A673 (cell line): ENCODE measurements at regions of chr10 and their contacts with region 1.

Region 1: DNA sequence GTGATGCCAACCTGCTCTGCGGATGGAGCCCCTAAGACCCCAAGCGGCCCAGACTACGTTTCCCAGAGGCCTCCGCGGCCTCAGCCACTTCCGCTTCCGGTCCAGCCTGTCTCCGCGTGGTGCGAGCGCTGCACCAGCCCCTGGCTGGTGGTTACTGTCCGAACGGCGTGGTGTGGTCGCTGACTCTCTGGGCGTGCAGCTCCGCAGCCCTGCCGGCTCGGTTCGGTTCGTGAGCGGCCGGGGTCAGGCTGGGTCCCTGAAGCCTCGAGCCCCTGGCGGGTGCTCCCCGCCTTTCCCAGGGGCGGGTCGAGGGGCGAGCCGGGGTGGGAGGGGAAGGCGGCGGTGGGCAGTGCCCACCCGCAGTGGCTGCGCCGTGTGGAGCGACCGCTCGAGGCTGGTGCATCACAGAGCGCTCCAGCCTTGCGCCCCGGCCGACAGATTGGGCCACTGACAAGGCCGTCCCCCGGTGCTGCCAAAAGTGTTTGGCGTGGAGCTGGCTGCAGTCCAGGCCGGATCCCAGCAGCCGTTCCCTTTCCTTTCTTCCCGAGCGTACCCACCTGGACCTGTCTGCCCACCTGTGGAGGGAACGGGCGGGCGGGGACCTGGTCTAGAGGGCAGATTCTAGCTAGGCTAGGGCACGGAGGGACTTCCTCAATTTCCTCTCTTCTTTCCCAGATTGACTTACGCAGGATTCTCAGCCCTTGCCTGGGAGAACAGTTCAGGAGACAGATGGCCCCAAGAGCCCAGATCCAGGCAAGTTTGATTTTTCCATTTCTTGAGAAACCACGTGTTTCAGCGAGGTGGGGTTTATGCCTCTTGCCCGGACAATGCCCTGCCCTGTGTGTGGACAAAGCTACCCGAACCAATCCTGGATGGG is at the start of gene ZNF485:
- DNase-seq: peak; percentile 79
- H3K4me3 ChIP-seq: peak within 1 kb of the TSS; percentile 82
- H3K27ac ChIP-seq: peak within 1 kb of the TSS; percentile 74
- H3K4me1 ChIP-seq: peaks cover 7% of the 10 kb centered on the region
- H3K27me3 ChIP-seq: no peaks in the 10 kb centered on the region
- CTCF ChIP-seq: no peak
- total RNA-seq, gene ZNF485: 5.1 and 7.2 TPM in 2 replicates

Region 2: GRCh38 chr10:43273543-43273942 is 333.0 kb before region 1 on chr10:
- CTCF ChIA-PET with region 1: no interaction called
- POLR2A ChIA-PET with region 1: no interaction called
- intact Hi-C with region 1: no loop called
- DNase-seq: no peak
- H3K4me3 ChIP-seq: no peak overlapping the region
- H3K27ac ChIP-seq: no peak overlapping the region
- H3K4me1 ChIP-seq: no peaks in the 10 kb centered on the region
- H3K27me3 ChIP-seq: peaks cover 55% of the 10 kb centered on the region
- CTCF ChIP-seq: no peak

Region 3: DNA sequence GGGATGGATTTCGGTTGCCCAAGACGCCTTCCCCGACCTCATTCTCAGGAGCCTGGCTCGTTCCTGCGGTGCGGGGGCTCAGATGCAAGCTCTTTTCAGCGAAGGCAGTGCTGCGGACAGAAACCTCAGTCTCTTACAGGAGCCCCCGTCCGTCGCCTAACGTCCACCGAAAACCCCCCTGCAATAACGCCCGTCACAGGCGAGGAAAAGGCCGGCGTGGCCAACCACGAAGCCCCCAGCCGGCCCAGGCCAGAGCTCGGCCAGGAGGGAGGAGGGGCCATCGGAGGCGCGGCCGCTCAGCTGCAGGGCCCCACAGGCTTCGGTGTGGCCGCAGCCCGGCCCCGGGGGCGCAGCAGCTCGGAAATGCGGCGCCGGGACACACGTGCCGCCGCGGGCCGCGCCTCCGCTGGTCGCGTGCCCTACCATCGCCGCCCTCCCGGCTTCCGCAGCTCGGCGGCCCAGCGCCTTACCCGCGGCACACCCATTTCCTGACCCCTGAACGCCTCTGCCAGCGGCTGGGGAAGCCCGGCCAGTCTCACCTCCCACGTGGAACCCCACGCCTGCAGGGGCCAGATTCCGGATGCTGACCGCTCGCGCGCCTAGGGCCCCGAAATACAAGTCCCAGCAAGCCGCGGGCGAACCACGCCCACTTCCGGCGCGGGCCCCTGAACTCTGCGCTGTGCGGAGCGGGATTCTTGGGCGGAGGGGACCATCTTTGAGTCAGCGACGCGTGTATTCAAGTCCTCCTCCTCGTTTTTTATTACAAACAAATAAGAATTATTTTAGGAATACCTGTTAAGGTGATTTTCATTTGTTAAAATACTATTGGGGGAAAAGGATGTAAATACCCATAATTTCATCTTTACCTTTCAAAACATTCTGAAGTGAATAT is 32.3 kb before region 1 on chr10 and contains the start of gene ZNF239:
- CTCF ChIA-PET with region 1: no interaction called
- POLR2A ChIA-PET with region 1: no interaction called
- intact Hi-C with region 1: loop called (anchors 2 kb)
- DNase-seq: peak; percentile 88
- H3K4me3 ChIP-seq: peak within 1 kb of the TSS; percentile 45
- H3K27ac ChIP-seq: peak within 1 kb of the TSS; percentile 31
- H3K4me1 ChIP-seq: peaks cover 5% of the 10 kb centered on the region
- H3K27me3 ChIP-seq: no peaks in the 10 kb centered on the region
- CTCF ChIP-seq: no peak
- total RNA-seq, gene ZNF239: 7.9 and 9.7 TPM in 2 replicates